Heart right ventricle (tissue), 16 donors: ENCODE measurements at regions of chr3 and their contacts with region 1.

Region 1: DNA sequence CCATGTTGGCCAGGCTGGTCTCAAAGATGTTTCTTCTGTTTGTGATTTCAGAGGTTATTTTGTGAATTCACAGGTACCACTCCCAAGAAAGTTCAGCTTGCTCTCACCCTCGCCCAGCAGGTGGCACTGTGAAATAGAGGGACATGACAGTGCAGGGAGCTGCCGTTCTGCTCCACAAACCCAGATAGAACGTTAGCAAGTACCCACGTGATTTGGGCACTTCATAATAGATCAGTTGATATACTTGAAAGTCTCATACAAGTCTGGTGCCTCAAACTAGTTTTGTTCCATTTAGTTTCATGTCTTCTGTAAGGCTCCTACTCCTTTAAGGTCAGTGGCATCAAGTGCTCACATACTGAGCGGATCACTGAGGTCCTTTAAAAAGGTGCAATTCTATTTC is 45.5 kb downstream of the FILIP1L start:
- DNase-seq: peak; percentile 74 to 85
- ATAC-seq: peak; percentile 82 to 92 (median 88)
- H3K4me3 ChIP-seq: no peak overlapping the region
- H3K27ac ChIP-seq: peak overlapping the region in 5 of 10 donors; percentile 30 to 44 (median 38)
- H3K4me1 ChIP-seq: peaks cover 0 to 47% (median 19%) of the 10 kb centered on the region in 9 donors
- H3K27me3 ChIP-seq: no peaks in the 10 kb centered on the region
- CTCF ChIP-seq: peak; percentile 64 to 88 (median 78)

Region 2: GRCh38 chr3:99833617-99834205 is 235.1 kb before region 1 on chr3:
- intact Hi-C with region 1: loop called in 2 of 10 experiments (anchors 5 kb)
- DNase-seq: no peak
- ATAC-seq: no peak
- H3K4me3 ChIP-seq: no peak overlapping the region
- H3K27ac ChIP-seq: peak overlapping the region in 7 of 10 donors; percentile 5 to 62 (median 25)
- H3K4me1 ChIP-seq: peaks cover 0 to 47% (median 23%) of the 10 kb centered on the region in 9 donors
- H3K27me3 ChIP-seq: no peaks in the 10 kb centered on the region
- CTCF ChIP-seq: no peak